Cardiac septum (tissue), 1 donor: ENCODE measurements at regions of chr2 and their contacts with region 1.

Region 1: GRCh38 chr2:201171259-201171814 is 11.6 kb upstream of the CASP10 start:
- DNase-seq: no peak

Region 2: GRCh38 chr2:200713003-200713703 is 458.2 kb before region 1 on chr2:
- intact Hi-C with region 1: loop called (anchors 10 kb)
- DNase-seq: peak; percentile 93

Region 3: DNA sequence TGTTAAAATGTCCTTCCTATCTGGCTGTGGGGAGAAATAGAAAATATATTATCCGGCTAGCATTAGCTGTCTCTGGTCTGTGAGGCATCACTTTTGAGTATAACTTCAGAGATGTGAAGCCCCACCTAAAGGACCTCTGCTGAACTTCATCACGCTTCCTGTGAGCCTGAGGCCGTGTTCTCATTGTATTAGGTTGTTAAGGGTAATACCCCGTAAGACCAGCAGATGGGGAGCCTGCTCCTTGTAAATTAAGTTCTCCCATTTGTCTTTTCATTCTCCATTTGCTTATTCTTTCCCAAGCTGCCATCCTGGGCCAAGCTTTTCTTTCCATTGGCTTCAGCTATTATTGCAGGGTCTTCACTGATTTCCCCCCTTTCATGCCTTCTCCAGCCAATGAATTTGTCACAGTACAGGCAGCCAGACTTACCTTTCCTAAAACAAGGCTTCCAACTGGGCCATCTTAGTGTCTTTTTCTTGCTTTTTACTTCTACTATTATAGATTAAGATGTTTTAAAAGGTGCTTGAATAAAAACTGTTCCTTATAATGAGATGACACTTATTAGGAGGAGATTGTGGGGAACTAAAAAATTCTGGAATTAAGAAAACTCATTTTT is 269.8 kb before region 1 on chr2:
- intact Hi-C with region 1: loop called (anchors 5 kb)
- DNase-seq: no peak

Region 4: GRCh38 chr2:200963124-200963917 is 208.0 kb before region 1 on chr2 and contains the start of gene ORC2:
- intact Hi-C with region 1: loop called (anchors 5 kb)
- DNase-seq: peak; percentile 97
- total RNA-seq, gene ORC2: 24.9 TPM

Region 5: GRCh38 chr2:201109186-201109585 is 62.2 kb before region 1 on chr2:
- intact Hi-C with region 1: no loop called
- DNase-seq: no peak

Region 6: DNA sequence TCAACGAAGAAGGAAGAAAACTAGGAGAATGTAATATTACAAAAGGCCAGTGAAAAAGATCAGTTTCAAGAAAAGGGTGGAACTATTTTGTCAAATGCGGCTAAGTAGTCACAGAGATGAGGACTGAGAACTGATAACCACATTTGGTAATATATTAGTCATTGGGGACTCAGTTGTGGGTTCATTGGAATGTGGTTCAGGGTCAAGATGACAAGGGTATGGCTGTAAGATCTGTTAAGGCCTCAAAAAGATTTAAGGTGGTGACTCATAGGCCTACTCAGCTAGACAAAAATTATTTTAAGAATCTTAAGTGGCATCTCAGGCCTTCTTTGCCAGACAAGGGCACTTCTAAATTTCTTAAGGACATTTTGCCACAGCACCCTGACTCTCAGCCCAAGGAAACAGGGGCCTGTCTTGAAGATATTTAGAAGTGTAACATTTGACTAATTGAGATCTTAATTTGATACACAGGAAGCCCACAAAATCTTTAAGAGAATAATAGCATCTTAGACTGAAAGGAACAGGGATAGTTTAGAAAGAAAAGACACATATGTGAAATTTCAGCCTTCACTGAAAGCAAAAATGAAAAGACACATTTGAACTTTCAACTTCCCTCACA is 361.5 kb after region 1 on chr2:
- intact Hi-C with region 1: no loop called
- DNase-seq: no peak